HCT116 (cell line): ENCODE measurements at regions of chr11 and their contacts with region 1.

Region 1: GRCh38 chr11:112555491-112556364 is 295.1 kb upstream of the PLET1 start:
- DNase-seq: peak; percentile 8
- ATAC-seq: peak; percentile 89
- H3K4me3 ChIP-seq: no peak overlapping the region
- H3K27ac ChIP-seq: no peak overlapping the region
- H3K4me1 ChIP-seq: no peaks in the 10 kb centered on the region
- H3K27me3 ChIP-seq: peaks cover 19% of the 10 kb centered on the region; the same call in 1 of the 2 replicates
- CTCF ChIP-seq: peak; percentile 50 to 85 (median 72); a peak in 5 of 6 replicates
- POLR2A ChIP-seq: no peak
- RAD21 ChIP-seq: peak; percentile 56

Region 2: GRCh38 chr11:112440518-112440917 is 115.2 kb before region 1 on chr11:
- CTCF ChIA-PET with region 1: interaction called, 10 read pairs
- POLR2A ChIA-PET with region 1: no interaction called
- RAD21 ChIA-PET with region 1: no interaction called
- intact Hi-C with region 1: no loop called
- DNase-seq: peak; percentile 13
- ATAC-seq: peak; percentile 60; the same call in 1 of the 2 replicates
- H3K4me3 ChIP-seq: no peak overlapping the region
- H3K27ac ChIP-seq: no peak overlapping the region
- H3K4me1 ChIP-seq: no peaks in the 10 kb centered on the region
- H3K27me3 ChIP-seq: peaks cover 19% of the 10 kb centered on the region
- CTCF ChIP-seq: peak in 2 of 3 experiments; percentile 41 to 43; a peak in 3 of 6 replicates
- POLR2A ChIP-seq: no peak
- RAD21 ChIP-seq: peak; percentile 45

Region 3: GRCh38 chr11:112453601-112454577 is 101.8 kb before region 1 on chr11:
- CTCF ChIA-PET with region 1: interaction called, 11 read pairs
- POLR2A ChIA-PET with region 1: no interaction called
- RAD21 ChIA-PET with region 1: no interaction called
- intact Hi-C with region 1: no loop called
- DNase-seq: peak; percentile 34
- ATAC-seq: peak; percentile 94
- H3K4me3 ChIP-seq: no peak overlapping the region
- H3K27ac ChIP-seq: no peak overlapping the region
- H3K4me1 ChIP-seq: no peaks in the 10 kb centered on the region
- H3K27me3 ChIP-seq: no peaks in the 10 kb centered on the region
- CTCF ChIP-seq: peak; percentile 46 to 80 (median 54); a peak in 5 of 6 replicates
- POLR2A ChIP-seq: no peak
- RAD21 ChIP-seq: peak; percentile 40